ENCODE measurements at regions of chr2 and their contacts with region 1.

Region 1: GRCh38 chr2:20015472-20016083 is 3.1 kb upstream of the MATN3 start:
- DNase-seq: peak; percentile 7
- ATAC-seq: peak; percentile 79
- H3K4me3 ChIP-seq: no peak overlapping the region
- H3K27ac ChIP-seq: no peak overlapping the region
- H3K4me1 ChIP-seq: no peaks in the 10 kb centered on the region
- H3K27me3 ChIP-seq: peaks cover 5 to 16% of the 10 kb centered on the region in 2 experiments
- CTCF ChIP-seq: peak; percentile 49 to 52 (median 51); a peak in 5 of 6 replicates
- EP300 ChIP-seq: no peak
- POLR2A ChIP-seq: no peak
- RAD21 ChIP-seq: peak; percentile 64

Region 2: DNA sequence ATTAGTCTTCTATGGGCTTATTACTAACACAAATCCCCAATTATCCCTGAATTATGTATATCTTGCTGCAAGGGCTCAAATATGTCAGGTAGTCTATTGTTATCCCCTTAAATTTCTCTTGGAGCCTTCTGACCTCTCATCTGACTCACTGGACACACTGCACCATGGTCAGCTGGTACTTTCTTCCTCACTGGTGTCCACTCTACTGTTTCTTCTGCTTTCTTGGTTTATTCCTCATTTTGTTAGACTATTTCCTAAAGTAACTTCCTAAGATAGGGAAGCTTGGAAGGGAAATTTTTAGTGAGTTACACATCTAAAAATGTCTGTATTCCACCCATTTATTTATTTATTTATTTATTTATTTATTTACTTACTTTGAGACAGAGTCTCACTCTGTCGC is 52.2 kb before region 1 on chr2:
- CTCF ChIA-PET with region 1: interaction called, 15 read pairs
- POLR2A ChIA-PET with region 1: no interaction called
- RAD21 ChIA-PET with region 1: interaction called, 4 read pairs
- SMC1A ChIA-PET with region 1: interaction called, 3 read pairs
- in situ Hi-C with region 1: no loop called
- intact Hi-C with region 1: no loop called
- DNase-seq: no peak
- ATAC-seq: no peak
- H3K4me3 ChIP-seq: no peak overlapping the region
- H3K27ac ChIP-seq: no peak overlapping the region
- H3K4me1 ChIP-seq: no peaks in the 10 kb centered on the region
- H3K27me3 ChIP-seq: no peaks in the 10 kb centered on the region
- CTCF ChIP-seq: no peak
- EP300 ChIP-seq: no peak
- POLR2A ChIP-seq: no peak
- RAD21 ChIP-seq: no peak

Region 3: GRCh38 chr2:20001361-20001863 is 14.2 kb before region 1 on chr2:
- CTCF ChIA-PET with region 1: interaction called, 12 read pairs
- POLR2A ChIA-PET with region 1: no interaction called
- RAD21 ChIA-PET with region 1: no interaction called
- SMC1A ChIA-PET with region 1: interaction called, 5 read pairs
- in situ Hi-C with region 1: no loop called
- intact Hi-C with region 1: no loop called
- DNase-seq: no peak
- ATAC-seq: no peak
- H3K4me3 ChIP-seq: no peak overlapping the region
- H3K27ac ChIP-seq: no peak overlapping the region
- H3K4me1 ChIP-seq: no peaks in the 10 kb centered on the region
- H3K27me3 ChIP-seq: peaks cover 2 to 6% of the 10 kb centered on the region in 2 experiments; a peak in 3 of 4 replicates
- CTCF ChIP-seq: no peak
- EP300 ChIP-seq: no peak
- POLR2A ChIP-seq: no peak
- RAD21 ChIP-seq: no peak

Region 4: DNA sequence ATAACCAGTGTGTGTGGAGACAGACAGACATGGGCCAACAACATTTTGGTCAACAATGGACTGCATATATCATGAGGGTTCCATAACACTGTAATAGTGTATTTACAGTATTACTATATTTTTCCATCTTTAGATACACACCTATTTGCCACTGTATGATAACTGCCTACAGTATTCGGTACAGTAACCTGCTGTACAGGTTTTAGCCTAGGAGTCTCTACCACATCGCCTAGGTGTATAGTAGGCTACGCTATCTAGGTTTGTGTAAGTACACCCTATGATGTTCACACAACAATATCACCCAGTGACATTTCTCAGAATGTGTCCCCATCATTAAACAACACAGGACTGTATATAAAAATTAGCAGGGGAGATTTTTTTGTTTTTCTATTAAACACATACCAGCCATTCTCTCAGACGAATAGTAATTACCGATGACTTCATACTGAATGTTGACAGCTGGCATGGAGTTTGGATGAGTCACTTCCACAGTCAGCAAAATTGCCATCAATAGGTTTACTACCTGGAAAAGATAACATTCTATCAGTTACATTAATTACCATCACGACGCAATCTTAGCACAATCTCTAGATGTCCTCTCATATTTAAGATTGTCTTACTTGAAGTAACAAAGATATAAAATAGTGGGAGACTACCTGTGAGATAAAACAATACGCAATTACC is 25.1 kb after region 1 on chr2:
- CTCF ChIA-PET with region 1: interaction called, 31 read pairs
- POLR2A ChIA-PET with region 1: no interaction called
- RAD21 ChIA-PET with region 1: interaction called, 5 read pairs
- SMC1A ChIA-PET with region 1: interaction called, 12 read pairs
- in situ Hi-C with region 1: no loop called
- intact Hi-C with region 1: no loop called
- DNase-seq: no peak
- ATAC-seq: no peak
- H3K4me3 ChIP-seq: no peak overlapping the region
- H3K27ac ChIP-seq: no peak overlapping the region
- H3K4me1 ChIP-seq: peaks cover 3% of the 10 kb centered on the region; the same call in 1 of the 2 replicates
- H3K27me3 ChIP-seq: no peaks in the 10 kb centered on the region
- CTCF ChIP-seq: no peak
- EP300 ChIP-seq: no peak
- POLR2A ChIP-seq: no peak
- RAD21 ChIP-seq: no peak

Region 5: DNA sequence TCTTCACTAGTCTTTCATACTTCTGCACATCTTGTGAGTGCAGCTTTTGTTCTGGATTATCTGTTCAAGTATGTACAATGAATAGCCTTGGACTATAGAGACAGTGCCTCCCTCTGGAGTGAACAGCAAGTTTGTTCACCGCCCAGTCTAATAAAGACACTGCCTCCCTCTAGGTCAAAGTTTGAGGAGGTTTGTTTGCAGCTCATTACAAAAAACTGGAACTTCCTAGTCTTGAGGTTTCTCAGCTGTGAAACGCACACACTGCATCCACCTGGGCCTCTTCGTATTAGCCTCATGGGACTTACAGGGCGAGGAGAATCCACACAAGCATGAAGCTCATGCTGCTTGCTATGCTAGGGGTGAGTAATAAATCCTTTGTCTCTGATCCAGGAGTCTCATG is 61.9 kb after region 1 on chr2:
- CTCF ChIA-PET with region 1: interaction called, 26 read pairs
- POLR2A ChIA-PET with region 1: no interaction called
- RAD21 ChIA-PET with region 1: interaction called, 14 read pairs
- SMC1A ChIA-PET with region 1: interaction called, 8 read pairs
- in situ Hi-C with region 1: no loop called
- intact Hi-C with region 1: no loop called
- DNase-seq: no peak
- ATAC-seq: peak; percentile 54
- H3K4me3 ChIP-seq: no peak overlapping the region
- H3K27ac ChIP-seq: no peak overlapping the region
- H3K4me1 ChIP-seq: no peaks in the 10 kb centered on the region
- H3K27me3 ChIP-seq: no peaks in the 10 kb centered on the region; a peak in 2 of 4 replicates
- CTCF ChIP-seq: 0 out of 6 replicates have a peak, but pooled peaks of 1 of the 3 experiments have one; percentile 5
- EP300 ChIP-seq: no peak
- POLR2A ChIP-seq: no peak
- RAD21 ChIP-seq: no peak

Region 6: DNA sequence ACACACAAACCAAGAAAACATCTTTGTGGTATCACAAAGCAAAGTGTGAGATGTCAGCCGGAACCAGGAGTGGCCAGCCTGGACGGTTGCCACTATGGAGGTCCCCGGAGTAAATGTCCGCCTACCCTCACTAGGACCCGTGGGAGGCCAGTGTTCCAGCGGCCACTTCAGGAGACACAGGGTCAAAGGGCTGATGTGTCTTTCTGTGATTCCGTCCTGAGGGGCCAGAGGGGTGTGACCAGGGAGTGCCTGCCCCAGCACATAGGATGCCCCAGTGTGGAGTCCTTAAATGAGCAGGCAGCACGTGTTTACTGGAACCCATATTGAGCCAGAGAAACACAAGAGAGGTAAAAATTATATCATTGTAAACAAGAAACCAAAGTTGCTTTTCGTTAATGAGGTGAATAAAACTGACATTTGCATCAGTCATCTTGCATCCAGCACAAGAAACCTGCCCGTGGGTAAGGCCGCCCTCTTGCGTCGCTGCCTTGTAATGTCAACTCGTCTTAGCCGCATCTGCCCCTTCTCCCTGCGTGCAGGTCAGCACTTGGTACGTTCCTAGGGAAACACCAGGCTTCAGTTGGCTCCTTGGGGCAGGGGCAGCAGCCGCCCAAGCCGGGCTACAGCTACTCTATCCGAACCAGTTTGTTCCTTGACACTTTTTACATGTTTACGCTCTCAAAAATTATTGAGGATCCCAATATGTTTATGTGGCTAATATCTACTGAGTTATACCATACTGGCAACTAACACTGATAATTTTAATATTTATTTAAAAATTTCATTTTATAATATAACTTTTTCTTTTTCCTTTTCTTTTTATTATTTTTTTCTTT is 82.5 kb after region 1 on chr2:
- CTCF ChIA-PET with region 1: interaction called, 57 read pairs
- POLR2A ChIA-PET with region 1: interaction called, 3 read pairs
- RAD21 ChIA-PET with region 1: interaction called, 20 read pairs
- SMC1A ChIA-PET with region 1: interaction called, 31 read pairs
- in situ Hi-C with region 1: loop called (anchors 10 kb)
- intact Hi-C with region 1: loop called (anchors 1 kb)
- DNase-seq: peak; percentile 49
- ATAC-seq: peak; percentile 96
- H3K4me3 ChIP-seq: no peak overlapping the region
- H3K27ac ChIP-seq: no peak overlapping the region
- H3K4me1 ChIP-seq: no peaks in the 10 kb centered on the region; the same call in 1 of the 2 replicates
- H3K27me3 ChIP-seq: no peaks in the 10 kb centered on the region
- CTCF ChIP-seq: peak; percentile 92 to 99 (median 97); a peak in 5 of 6 replicates
- EP300 ChIP-seq: no peak
- POLR2A ChIP-seq: no peak
- RAD21 ChIP-seq: peak; percentile 99

Region 7: DNA sequence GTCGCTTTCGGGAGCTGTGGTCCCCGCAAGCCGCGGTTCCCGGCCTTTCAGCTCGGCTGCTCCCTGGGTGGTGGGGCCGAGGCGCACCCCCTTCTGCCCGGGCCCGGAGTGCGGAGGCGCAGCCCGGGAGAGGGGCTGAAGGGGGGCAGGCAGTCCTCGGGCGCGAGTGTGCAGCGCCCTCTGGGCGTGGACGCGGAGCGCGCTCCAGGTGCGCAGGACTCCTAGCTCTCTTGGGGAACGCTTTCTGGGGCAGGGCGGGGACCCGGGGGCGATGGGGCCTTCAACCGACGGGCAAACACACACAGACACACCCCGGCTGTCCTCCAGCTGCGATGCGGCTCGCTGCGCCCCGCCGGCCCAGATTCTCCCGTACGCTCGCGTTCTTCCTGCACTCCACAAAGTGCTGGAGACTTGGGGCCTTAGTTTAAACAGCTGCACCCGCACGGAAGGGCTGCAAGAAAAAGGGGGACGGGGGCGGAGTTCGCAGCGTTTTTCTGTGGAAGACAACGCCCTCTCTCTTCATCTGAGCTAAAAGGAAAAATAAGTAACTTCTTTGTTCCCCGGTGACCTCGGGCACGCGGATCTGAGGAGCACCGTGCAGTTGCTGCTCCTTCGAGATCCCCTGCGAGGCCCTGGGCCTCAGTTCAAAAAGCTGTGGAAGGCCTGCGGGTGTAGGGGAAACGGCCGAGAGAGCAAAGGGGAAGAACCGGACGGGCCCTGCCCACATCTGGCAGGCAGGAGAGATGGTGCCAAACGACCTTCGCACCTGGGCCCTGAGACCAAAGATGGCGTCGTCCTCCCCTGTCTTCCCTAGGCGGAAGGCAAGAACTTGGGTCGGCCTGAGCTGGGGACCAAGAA is 209.9 kb after region 1 on chr2:
- CTCF ChIA-PET with region 1: interaction called, 27 read pairs
- POLR2A ChIA-PET with region 1: no interaction called
- RAD21 ChIA-PET with region 1: interaction called, 12 read pairs
- SMC1A ChIA-PET with region 1: interaction called, 18 read pairs
- in situ Hi-C with region 1: no loop called
- intact Hi-C with region 1: no loop called
- DNase-seq: no peak
- ATAC-seq: peak; percentile 81
- H3K4me3 ChIP-seq: peak overlapping the region; percentile 73; the same call in 1 of the 2 replicates
- H3K27ac ChIP-seq: no peak overlapping the region
- H3K4me1 ChIP-seq: peaks cover 29% of the 10 kb centered on the region
- H3K27me3 ChIP-seq: no peaks in the 10 kb centered on the region; a peak in 1 of 4 replicates
- CTCF ChIP-seq: peak; percentile 61 to 90 (median 84)
- EP300 ChIP-seq: no peak
- POLR2A ChIP-seq: no peak; the same call in 1 of the 2 replicates
- RAD21 ChIP-seq: peak; percentile 87